K562 (cell line): ENCODE measurements at regions of chr2 and their contacts with region 1.

Region 1: DNA sequence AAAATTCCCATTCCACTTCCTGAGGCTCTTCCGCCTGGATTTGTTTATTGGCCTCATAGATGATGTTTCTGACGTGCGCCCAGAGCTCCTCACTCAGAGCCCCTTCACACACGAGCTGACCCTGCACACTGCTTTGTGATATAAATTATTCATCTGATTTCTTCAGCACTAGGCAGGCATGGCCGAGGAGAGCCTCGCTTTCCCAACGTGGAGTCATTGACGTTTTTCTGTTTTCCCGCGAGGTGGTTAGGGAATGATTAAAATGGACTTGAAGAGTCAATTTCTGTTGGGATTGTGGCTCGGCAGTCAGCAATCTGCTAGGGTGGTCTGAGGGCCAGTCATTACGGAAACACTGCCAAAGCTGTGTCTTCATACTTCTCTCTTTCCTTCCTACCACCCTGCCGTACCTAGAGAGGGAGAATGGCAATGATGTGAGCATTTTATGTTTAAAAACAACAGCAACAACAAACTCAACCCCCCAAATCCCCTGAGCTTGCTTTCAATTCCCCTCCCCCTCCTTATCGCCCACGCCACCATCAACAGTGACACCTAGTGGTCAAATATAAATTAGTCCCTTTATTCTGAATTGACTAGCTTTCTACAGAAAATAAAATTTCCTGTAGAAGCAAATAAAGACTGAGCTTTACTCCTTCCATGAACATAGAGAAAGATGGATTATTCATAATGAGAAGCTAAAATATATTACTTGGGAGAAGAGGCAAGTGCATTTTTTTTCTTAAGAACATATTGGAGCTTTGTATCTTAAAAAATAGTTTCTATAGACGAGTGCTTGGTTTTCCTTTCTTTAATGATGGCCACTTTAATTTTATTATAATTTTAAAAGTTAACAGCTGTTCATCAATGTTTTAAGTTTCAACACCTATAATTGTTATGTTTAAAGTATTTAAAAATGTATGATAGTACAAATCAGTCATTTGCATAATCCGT is 285.1 kb downstream of the MTX2 start:
- DNase-seq: peak; percentile 69 to 81 (median 78)
- ATAC-seq: peak; percentile 84
- H3K4me3 ChIP-seq: no peak overlapping the region
- H3K27ac ChIP-seq: no peak overlapping the region
- H3K4me1 ChIP-seq: peaks cover 0 to 3% of the 10 kb centered on the region in 2 experiments; a peak in 1 of 5 replicates
- H3K27me3 ChIP-seq: peaks cover 6 to 20% of the 10 kb centered on the region in 2 experiments
- CTCF ChIP-seq: peak; percentile 66 to 82 (median 78)
- EP300 ChIP-seq: no peak
- POLR2A ChIP-seq: no peak
- RAD21 ChIP-seq: peak; percentile 79 to 87

Region 2: GRCh38 chr2:176385838-176386237 is 168.5 kb before region 1 on chr2:
- CTCF ChIA-PET with region 1: no interaction called
- POLR2A ChIA-PET with region 1: no interaction called
- in situ Hi-C with region 1: no loop called
- intact Hi-C with region 1: loop called (anchors 10 kb)
- DNase-seq: no peak
- ATAC-seq: 0 out of 3 replicates have a peak, but pooled peaks have one; percentile 25
- H3K4me3 ChIP-seq: no peak overlapping the region
- H3K27ac ChIP-seq: no peak overlapping the region
- H3K4me1 ChIP-seq: no peaks in the 10 kb centered on the region
- H3K27me3 ChIP-seq: 0 out of 5 replicates have a peak, but pooled peaks cover 0 to 3% of the 10 kb centered on the region in 2 experiments
- CTCF ChIP-seq: peak; percentile 21 to 36 (median 23); a peak in 2 of 6 replicates
- EP300 ChIP-seq: no peak
- POLR2A ChIP-seq: no peak
- RAD21 ChIP-seq: no peak

Region 3: GRCh38 chr2:176454893-176455811 is 99.2 kb before region 1 on chr2:
- CTCF ChIA-PET with region 1: interaction called, 3 read pairs
- POLR2A ChIA-PET with region 1: interaction called, 3 read pairs
- in situ Hi-C with region 1: no loop called
- intact Hi-C with region 1: loop called (anchors 2 kb)
- DNase-seq: peak; percentile 65 to 77 (median 75)
- ATAC-seq: peak; percentile 92
- H3K4me3 ChIP-seq: no peak overlapping the region
- H3K27ac ChIP-seq: no peak overlapping the region
- H3K4me1 ChIP-seq: no peaks in the 10 kb centered on the region
- H3K27me3 ChIP-seq: peaks cover 0 to 3% of the 10 kb centered on the region in 2 experiments; a peak in 2 of 5 replicates
- CTCF ChIP-seq: peak; percentile 83 to 90 (median 88)
- EP300 ChIP-seq: no peak
- POLR2A ChIP-seq: no peak
- RAD21 ChIP-seq: peak; percentile 75 to 84

Region 4: GRCh38 chr2:176638167-176639015 is 84.0 kb after region 1 on chr2:
- CTCF ChIA-PET with region 1: interaction called, 8 read pairs
- POLR2A ChIA-PET with region 1: no interaction called
- in situ Hi-C with region 1: no loop called
- intact Hi-C with region 1: loop called (anchors 5 kb)
- DNase-seq: peak; percentile 59 to 78 (median 63)
- ATAC-seq: peak; percentile 98
- H3K4me3 ChIP-seq: no peak overlapping the region
- H3K27ac ChIP-seq: no peak overlapping the region
- H3K4me1 ChIP-seq: peaks cover 0 to 9% of the 10 kb centered on the region in 2 experiments; a peak in 2 of 5 replicates
- H3K27me3 ChIP-seq: peaks cover 14 to 16% of the 10 kb centered on the region in 2 experiments
- CTCF ChIP-seq: peak; percentile 71 to 85 (median 82)
- EP300 ChIP-seq: no peak
- POLR2A ChIP-seq: no peak
- RAD21 ChIP-seq: peak; percentile 82 to 83

Region 5: GRCh38 chr2:176653479-176654443 is 99.4 kb after region 1 on chr2:
- CTCF ChIA-PET with region 1: no interaction called
- POLR2A ChIA-PET with region 1: no interaction called
- in situ Hi-C with region 1: no loop called
- intact Hi-C with region 1: loop called (anchors 5 kb)
- DNase-seq: peak; percentile 29 to 58 (median 50)
- ATAC-seq: peak; percentile 95
- H3K4me3 ChIP-seq: no peak overlapping the region
- H3K27ac ChIP-seq: no peak overlapping the region
- H3K4me1 ChIP-seq: no peaks in the 10 kb centered on the region
- H3K27me3 ChIP-seq: no peaks in the 10 kb centered on the region; a peak in 2 of 5 replicates
- CTCF ChIP-seq: peak; percentile 64 to 77 (median 66)
- EP300 ChIP-seq: no peak
- POLR2A ChIP-seq: no peak
- RAD21 ChIP-seq: peak; percentile 26 to 42; a peak in 2 of 4 replicates